B cell (primary cell): ENCODE measurements at regions of chr10 and their contacts with region 1.

Region 1: GRCh38 chr10:110311357-110311949 is 6.7 kb upstream of the SMNDC1 start:
- DNase-seq: peak; percentile 73
- ATAC-seq: peak; percentile 78
- H3K4me3 ChIP-seq: no peak overlapping the region
- H3K4me3 Mint-ChIP-seq: no peak overlapping the region
- H3K27ac ChIP-seq: no peak overlapping the region
- H3K27ac Mint-ChIP-seq: no peak overlapping the region
- H3K4me1 ChIP-seq: peaks cover 3% of the 10 kb centered on the region in 2 donors
- H3K4me1 Mint-ChIP-seq: peaks cover 8% of the 10 kb centered on the region
- H3K27me3 ChIP-seq: no peaks in the 10 kb centered on the region
- H3K27me3 Mint-ChIP-seq: peaks cover 4% of the 10 kb centered on the region
- CTCF ChIP-seq: peak; percentile 76

Region 2: DNA sequence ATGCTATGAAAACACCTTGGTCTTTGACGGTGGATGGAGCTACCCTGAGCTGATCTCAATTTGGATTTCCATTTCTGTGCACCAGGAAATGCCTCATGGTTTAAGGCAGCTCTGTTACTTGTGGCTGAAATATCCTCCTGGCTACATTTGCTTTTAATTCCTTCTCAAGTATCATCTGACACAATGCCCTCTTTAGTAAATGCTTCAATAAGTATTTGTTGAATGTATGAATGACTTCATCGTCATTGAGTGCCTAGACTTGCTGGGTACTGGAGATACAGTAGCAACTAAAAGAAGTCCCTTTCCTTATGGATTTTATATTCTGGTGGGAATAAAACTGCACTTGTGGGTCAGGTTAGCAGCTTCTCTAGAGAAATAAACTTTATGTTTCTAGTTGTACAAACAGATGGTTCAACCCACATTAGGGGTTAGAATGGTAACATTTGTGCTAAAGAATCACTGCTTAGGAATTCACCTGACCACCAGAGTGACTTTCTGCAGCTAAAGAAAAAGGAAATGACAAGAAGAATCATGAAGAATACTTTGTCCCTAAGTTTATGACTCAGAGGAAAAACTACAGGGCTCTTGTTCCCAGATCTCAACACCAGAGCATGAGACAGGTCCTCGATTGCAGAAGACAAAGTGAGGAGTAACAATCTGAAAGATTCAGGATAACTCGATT is 15.0 kb after region 1 on chr10:
- CTCF ChIA-PET with region 1: interaction called, 31 read pairs
- POLR2A ChIA-PET with region 1: no interaction called
- intact Hi-C with region 1: no loop called
- DNase-seq: no peak
- ATAC-seq: no peak
- H3K4me3 ChIP-seq: no peak overlapping the region
- H3K4me3 Mint-ChIP-seq: peak overlapping the region; percentile 33
- H3K27ac ChIP-seq: no peak overlapping the region
- H3K27ac Mint-ChIP-seq: peak overlapping the region; percentile 17
- H3K4me1 ChIP-seq: peaks cover 15 to 16% of the 10 kb centered on the region in 2 donors
- H3K4me1 Mint-ChIP-seq: peaks cover 36% of the 10 kb centered on the region
- H3K27me3 ChIP-seq: no peaks in the 10 kb centered on the region
- H3K27me3 Mint-ChIP-seq: no peaks in the 10 kb centered on the region
- CTCF ChIP-seq: no peak

Region 3: GRCh38 chr10:110600487-110601101 is 289.1 kb after region 1 on chr10:
- CTCF ChIA-PET with region 1: interaction called, 143 read pairs
- POLR2A ChIA-PET with region 1: no interaction called
- intact Hi-C with region 1: loop called (anchors 1 kb)
- DNase-seq: peak; percentile 66
- ATAC-seq: peak; percentile 57
- H3K4me3 ChIP-seq: no peak overlapping the region
- H3K4me3 Mint-ChIP-seq: no peak overlapping the region
- H3K27ac ChIP-seq: no peak overlapping the region
- H3K27ac Mint-ChIP-seq: no peak overlapping the region
- H3K4me1 ChIP-seq: no peaks in the 10 kb centered on the region
- H3K4me1 Mint-ChIP-seq: no peaks in the 10 kb centered on the region
- H3K27me3 ChIP-seq: no peaks in the 10 kb centered on the region
- H3K27me3 Mint-ChIP-seq: no peaks in the 10 kb centered on the region
- CTCF ChIP-seq: peak; percentile 75